Dendritic cell treated with granulocyte-macrophage colony-stimulating factor and Interleukin-4, amounts not matched to agents 40 ng/mL and 50 ng/mL, for 4 days (primary cell): ENCODE measurements at regions of chr18 and their contacts with region 1.

Region 1: GRCh38 chr18:13558124-13558523 is 168.2 kb downstream of the FAM210A start:
- H3K4me3 Mint-ChIP-seq: no peak overlapping the region
- H3K27ac Mint-ChIP-seq: no peak overlapping the region
- H3K4me1 Mint-ChIP-seq: peaks cover 39% of the 10 kb centered on the region
- H3K27me3 Mint-ChIP-seq: no peaks in the 10 kb centered on the region

Region 2: GRCh38 chr18:13577091-13577697 is 19.1 kb after region 1 on chr18:
- intact Hi-C with region 1: loop called (anchors 2 kb)
- H3K4me3 Mint-ChIP-seq: peak overlapping the region; percentile 62
- H3K27ac Mint-ChIP-seq: peak overlapping the region; percentile 97
- H3K4me1 Mint-ChIP-seq: peaks cover 79% of the 10 kb centered on the region
- H3K27me3 Mint-ChIP-seq: no peaks in the 10 kb centered on the region

Region 3: DNA sequence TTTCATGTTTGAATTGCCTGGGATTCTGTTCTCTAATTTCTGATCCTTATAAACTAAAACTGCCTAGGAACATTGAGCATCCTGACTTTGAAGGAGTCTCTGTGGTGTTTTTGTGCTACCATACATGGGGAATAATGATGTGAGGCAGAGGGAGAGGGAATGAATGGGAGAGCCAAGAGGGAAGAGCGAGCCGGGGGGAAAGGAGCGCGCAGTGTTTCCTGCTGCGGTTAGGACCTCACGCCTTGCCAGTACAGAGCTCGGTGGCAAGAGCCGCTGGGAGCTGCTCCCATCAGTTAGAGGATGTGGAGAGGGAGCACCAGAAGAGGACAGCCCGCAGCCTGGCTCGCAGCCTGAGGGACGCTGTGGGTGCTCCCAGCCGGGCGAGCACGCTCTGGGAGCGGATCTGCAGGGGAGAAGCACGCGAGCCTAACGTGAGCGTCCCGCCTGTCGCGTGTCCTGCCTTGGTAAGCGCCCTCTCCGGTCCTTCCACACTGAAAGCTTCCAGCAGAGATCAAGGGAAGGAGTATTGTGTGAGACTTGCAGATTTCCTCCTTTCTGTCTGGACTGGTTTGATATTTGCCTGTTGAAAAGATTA is 53.6 kb after region 1 on chr18:
- intact Hi-C with region 1: loop called (anchors 5 kb)
- H3K4me3 Mint-ChIP-seq: peak overlapping the region; percentile 66
- H3K27ac Mint-ChIP-seq: peak overlapping the region; percentile 71
- H3K4me1 Mint-ChIP-seq: peaks cover 76% of the 10 kb centered on the region
- H3K27me3 Mint-ChIP-seq: peaks cover 23% of the 10 kb centered on the region

Region 4: DNA sequence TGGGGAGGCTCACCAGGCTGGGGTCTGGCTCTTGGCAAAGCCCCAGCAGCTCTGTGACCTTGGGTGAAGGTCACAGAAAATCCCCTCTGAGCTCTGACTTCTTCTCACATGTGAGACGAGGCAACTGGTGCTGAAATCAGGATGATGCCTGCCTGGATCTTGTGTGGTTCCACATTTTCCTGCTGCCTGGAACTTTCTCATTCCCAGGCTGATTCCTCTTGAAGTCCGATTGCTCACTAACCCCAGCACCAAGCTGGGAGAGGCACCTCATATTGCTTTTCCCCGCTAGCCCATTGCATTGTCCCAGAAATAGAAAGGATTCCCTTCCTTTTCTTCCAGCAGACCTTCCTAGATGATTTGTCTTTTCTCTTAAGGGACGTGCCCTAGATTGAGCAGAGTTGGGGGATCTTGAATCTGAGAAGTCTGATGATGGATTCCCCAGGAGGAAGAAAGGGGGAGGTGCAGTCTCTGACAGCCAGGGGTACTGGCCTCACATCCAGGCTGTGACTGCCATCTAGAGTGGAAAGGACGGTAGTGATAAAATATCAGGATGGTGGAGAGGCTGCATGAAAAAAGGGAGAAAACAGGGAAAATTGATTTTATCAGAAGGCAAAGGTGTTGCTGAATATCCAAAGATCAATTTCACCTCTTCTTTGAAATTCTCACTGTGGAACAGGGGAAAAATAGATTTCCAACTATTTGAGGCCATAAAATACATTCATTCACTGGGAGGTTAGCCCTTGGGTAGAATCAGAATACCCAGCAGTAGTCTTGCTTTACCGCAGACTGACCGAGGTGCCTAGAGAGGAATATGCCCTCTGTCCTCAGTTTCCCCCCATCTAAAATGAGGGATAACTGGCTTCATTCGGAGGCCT is 72.0 kb after region 1 on chr18:
- intact Hi-C with region 1: loop called (anchors 1 kb)
- H3K4me3 Mint-ChIP-seq: no peak overlapping the region
- H3K27ac Mint-ChIP-seq: peak overlapping the region; percentile 73
- H3K4me1 Mint-ChIP-seq: peaks cover 45% of the 10 kb centered on the region
- H3K27me3 Mint-ChIP-seq: no peaks in the 10 kb centered on the region

Region 5: DNA sequence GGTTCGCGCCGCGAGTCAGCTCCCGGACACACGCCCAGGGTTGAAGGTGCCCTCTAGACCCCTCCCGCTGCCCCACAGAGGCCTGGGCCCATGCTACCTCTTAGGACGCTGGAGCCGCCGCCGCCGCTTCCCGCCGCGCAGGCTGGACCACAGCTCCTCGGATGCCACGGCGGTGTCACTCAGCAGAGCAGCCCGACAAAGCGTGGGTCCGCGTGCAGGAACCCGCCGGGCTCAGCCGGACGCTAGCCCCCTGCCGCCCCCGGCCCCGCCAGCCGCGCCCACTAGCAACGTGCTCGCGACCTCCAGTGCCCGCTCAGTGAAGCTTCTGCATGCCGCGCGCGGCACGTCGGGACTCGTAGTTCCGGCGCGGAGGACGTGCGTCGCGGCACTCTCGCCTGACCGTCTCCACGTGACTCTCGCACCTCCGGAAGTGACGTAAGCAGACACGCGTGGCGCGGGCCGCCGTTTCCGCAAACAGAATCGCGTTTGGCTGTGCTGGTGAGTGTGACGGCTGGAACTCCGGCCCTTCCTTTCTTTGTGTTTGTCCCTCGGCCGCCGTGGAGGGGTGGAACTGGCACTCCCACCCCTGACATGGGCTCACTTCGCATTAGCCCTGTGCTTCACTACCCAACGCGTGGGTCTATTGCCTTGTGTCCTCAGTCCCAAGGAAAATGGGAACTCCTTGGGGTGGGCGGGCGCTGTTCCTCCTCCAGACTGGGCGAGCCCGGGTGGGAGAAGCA is 168.3 kb after region 1 on chr18 and contains the starts of genes FAM210A and RNMT:
- intact Hi-C with region 1: loop called (anchors 10 kb)
- H3K4me3 Mint-ChIP-seq: peak within 1 kb of the TSS; percentile 96
- H3K27ac Mint-ChIP-seq: peak within 1 kb of the TSS; percentile 96
- H3K4me1 Mint-ChIP-seq: peaks cover 35% of the 10 kb centered on the region
- H3K27me3 Mint-ChIP-seq: no peaks in the 10 kb centered on the region